Activated naive CD4-positive, alpha-beta T cell treated with anti-CD3 and anti-CD28 coated beads for 36 hours (primary cell): ENCODE measurements at regions of chr22 and their contacts with region 1.

Region 1: GRCh38 chr22:37643225-37643847 is 3.9 kb downstream of the SH3BP1 start:
- DNase-seq: peak; percentile 93
- H3K4me3 Mint-ChIP-seq: no peak overlapping the region
- H3K27ac Mint-ChIP-seq: peak overlapping the region; percentile 47
- H3K4me1 Mint-ChIP-seq: peaks cover 34% of the 10 kb centered on the region
- H3K27me3 Mint-ChIP-seq: no peaks in the 10 kb centered on the region

Region 2: DNA sequence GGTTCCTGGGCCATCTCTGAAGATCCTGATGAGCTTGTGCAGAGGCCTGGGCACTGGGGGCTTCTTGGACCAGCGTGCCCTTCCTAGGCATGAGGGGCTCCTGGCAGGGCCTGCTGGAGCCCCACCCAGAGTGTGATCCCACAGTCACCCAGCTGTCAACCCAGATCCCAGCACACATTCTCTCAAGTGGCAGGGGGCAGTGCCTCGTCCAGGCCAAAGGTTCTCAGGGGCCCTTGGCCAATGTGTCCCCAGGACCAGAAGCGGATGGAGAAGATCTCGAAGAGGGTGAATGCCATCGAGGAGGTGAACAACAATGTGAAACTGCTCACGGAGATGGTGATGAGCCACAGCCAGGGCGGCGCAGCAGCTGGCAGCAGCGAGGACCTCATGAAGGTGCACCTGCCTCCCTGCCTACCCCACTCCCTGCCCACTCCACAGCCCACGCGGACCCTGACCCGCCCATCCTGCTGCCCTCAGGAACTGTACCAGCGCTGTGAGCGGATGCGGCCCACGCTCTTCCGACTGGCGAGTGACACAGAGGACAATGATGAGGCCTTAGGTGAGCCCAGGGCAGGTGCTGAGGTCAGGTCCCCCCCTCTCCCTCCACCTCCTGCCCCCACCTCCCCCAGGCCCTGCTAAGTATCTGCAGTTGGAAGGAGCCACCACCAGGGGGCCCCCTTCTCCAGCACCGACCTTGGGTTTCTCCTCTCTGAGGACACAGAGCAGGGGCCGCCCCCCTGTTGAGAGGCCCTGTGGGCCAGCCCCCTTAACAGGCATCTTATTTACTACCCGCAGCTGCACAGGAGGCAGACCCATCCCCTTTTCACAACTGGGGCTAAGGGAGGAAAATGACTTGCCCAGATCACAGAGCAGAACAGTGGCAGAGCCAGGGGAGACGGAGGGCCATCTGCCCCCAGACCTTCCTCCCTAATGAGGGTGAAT is 20.0 kb before region 1 on chr22:
- CTCF ChIA-PET with region 1: interaction called, 77 read pairs
- intact Hi-C with region 1: loop called (anchors 2 kb)
- DNase-seq: peak; percentile 86
- H3K4me3 Mint-ChIP-seq: no peak overlapping the region
- H3K27ac Mint-ChIP-seq: peak overlapping the region; percentile 84
- H3K4me1 Mint-ChIP-seq: peaks cover 40% of the 10 kb centered on the region
- H3K27me3 Mint-ChIP-seq: no peaks in the 10 kb centered on the region

Region 3: DNA sequence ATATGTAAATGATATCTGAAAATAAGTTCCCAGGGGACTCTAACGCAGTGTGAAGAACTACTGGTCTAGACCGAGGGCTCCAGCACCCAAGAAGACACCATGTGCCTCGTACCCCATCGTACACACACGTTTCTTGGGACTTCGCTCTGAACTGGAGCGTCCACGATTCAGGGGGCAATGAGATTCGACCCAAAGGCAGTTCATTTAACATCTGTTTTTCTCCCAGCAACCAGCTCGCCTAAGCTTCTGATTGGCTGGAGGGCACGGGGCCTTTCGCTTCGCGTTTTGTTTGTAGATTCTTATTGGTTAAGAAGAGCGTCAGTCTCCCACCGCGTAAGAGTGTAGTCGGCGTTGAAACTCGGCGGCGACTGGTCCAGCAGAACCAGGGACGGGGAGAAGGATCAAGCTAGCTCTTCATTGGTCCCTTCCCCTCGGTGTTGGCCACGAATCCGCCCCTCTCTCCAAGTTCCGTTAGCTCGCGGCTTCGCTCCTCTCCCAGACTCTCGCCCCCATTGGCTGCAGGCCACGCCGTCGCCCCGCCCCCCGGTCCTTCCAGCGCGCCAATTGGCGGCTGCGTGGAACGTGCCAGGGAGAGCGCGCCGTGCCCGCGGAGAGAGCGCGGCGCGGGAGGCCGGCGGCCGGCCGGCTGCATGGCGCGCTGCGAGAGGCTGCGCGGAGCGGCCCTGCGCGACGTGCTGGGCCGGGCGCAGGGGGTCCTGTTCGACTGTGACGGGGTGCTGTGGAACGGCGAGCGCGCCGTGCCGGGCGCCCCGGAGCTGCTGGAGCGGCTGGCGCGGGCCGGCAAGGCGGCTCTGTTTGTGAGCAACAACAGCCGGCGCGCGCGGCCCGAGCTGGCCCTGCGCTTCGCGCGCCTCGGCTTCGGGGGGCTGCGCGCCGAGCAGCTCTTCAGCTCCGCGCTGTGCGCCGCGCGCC is 15.1 kb after region 1 on chr22 and contains the start of gene PDXP:
- CTCF ChIA-PET with region 1: interaction called, 101 read pairs
- intact Hi-C with region 1: loop called (anchors 1 kb)
- DNase-seq: peak; percentile 98
- H3K4me3 Mint-ChIP-seq: peak within 1 kb of the TSS; percentile 92
- H3K27ac Mint-ChIP-seq: peak within 1 kb of the TSS; percentile 83
- H3K4me1 Mint-ChIP-seq: peaks cover 39% of the 10 kb centered on the region
- H3K27me3 Mint-ChIP-seq: no peaks in the 10 kb centered on the region
- total RNA-seq, gene PDXP: 17.4 to 19.2 TPM

Region 4: DNA sequence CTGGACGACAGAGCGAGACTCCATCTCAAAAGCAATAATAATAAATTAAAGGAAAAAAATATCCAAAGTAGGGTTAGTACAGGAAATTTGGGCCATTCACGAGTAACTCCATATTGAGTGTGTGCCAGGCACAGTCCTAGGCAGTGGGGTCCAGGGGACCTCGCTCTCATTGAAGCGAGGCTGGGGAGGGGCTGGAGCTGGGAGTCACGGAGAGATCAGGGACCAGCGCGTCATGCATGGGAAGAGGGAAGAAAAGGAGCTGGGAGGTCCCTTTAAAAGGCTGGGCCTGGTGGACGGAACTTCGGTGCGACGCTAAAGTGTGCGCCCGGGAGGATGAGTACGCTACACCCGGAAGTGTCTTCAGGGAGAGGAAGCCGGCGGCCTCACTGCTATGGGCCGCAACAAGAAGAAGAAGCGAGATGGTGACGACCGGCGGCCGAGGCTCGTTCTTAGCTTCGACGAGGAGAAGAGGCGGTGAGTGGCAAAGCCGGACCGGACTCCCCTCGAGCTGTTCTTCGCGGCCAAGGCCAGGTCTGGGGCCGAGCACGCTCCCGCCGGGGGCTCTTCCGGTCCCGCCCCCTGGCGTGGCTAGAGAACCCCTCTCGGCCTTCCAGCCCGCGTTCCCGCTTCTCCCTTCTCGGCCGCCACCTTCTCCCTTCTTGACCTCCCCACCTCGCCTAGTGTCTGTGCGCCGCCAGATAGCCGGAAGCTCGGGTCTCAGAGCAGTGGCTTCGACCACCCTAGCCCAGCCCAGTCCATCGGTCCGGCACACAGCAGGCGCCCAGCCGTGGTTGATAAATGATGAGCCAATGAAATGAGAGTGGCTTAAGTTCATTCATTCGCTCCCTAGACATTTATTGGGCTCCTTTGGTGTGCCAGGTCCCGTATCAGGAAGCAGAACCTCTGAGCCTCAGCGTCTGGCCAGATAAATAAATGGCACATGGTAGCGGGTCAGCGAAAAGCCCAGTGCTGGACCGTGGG is 43.0 kb after region 1 on chr22 and contains the start of gene NOL12:
- CTCF ChIA-PET with region 1: interaction called, 260 read pairs
- intact Hi-C with region 1: loop called (anchors 1 kb)
- DNase-seq: peak; percentile 81
- H3K4me3 Mint-ChIP-seq: peak within 1 kb of the TSS; percentile 92
- H3K27ac Mint-ChIP-seq: peak within 1 kb of the TSS; percentile 85
- H3K4me1 Mint-ChIP-seq: peaks cover 32% of the 10 kb centered on the region
- H3K27me3 Mint-ChIP-seq: no peaks in the 10 kb centered on the region
- total RNA-seq, gene NOL12: 26.7 to 30.4 TPM

Region 5: GRCh38 chr22:37696657-37697537 is 53.6 kb after region 1 on chr22 and contains the start of gene TRIOBP:
- CTCF ChIA-PET with region 1: interaction called, 20 read pairs
- intact Hi-C with region 1: no loop called
- DNase-seq: peak; percentile 86
- H3K4me3 Mint-ChIP-seq: no peak within 1 kb of the TSS
- H3K27ac Mint-ChIP-seq: no peak within 1 kb of the TSS
- H3K4me1 Mint-ChIP-seq: peaks cover 18% of the 10 kb centered on the region
- H3K27me3 Mint-ChIP-seq: no peaks in the 10 kb centered on the region
- total RNA-seq, gene TRIOBP: 17.5 to 18.8 TPM